ENCODE measurements at regions of chr9 and their contacts with region 1.

Region 1: GRCh38 chr9:107819754-107820153 is 330.2 kb upstream of the KLF4 start:
- DNase-seq: peak; percentile 65 to 69
- H3K4me3 ChIP-seq: no peak overlapping the region
- H3K4me3 Mint-ChIP-seq: no peak overlapping the region
- H3K27ac Mint-ChIP-seq: no peak overlapping the region
- H3K4me1 ChIP-seq: peaks cover 19% of the 10 kb centered on the region
- H3K4me1 Mint-ChIP-seq: peaks cover 25% of the 10 kb centered on the region
- H3K27me3 ChIP-seq: peaks cover 6% of the 10 kb centered on the region
- H3K27me3 Mint-ChIP-seq: peaks cover 14% of the 10 kb centered on the region
- CTCF ChIP-seq: no peak

Region 2: GRCh38 chr9:107576962-107577776 is 242.6 kb before region 1 on chr9:
- CTCF ChIA-PET with region 1: no interaction called
- POLR2A ChIA-PET with region 1: no interaction called
- intact Hi-C with region 1: no loop called
- DNase-seq: no peak
- H3K4me3 ChIP-seq: no peak overlapping the region
- H3K4me3 Mint-ChIP-seq: no peak overlapping the region
- H3K27ac Mint-ChIP-seq: no peak overlapping the region
- H3K4me1 ChIP-seq: no peaks in the 10 kb centered on the region
- H3K4me1 Mint-ChIP-seq: no peaks in the 10 kb centered on the region
- H3K27me3 ChIP-seq: no peaks in the 10 kb centered on the region
- H3K27me3 Mint-ChIP-seq: no peaks in the 10 kb centered on the region
- CTCF ChIP-seq: no peak

Region 3: DNA sequence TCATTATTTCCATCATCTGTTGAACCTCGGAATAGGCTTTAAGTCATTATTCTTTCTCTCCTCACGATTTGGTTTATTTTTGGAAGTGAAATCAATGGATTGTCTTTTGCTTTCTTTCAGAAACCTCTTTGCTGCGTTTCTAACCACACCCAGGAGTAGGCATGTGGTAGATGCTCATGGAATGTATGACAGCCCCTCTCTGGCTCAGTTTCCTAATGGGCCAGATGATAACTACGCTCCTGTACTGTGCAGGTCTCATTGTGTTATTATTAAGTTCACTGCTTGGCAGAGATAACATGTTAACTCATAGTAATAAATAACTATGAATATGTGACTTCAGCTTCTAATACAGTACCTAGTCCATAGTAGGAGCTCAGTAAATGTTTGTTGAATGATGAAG is 154.7 kb before region 1 on chr9:
- CTCF ChIA-PET with region 1: no interaction called
- POLR2A ChIA-PET with region 1: no interaction called
- intact Hi-C with region 1: no loop called
- DNase-seq: no peak
- H3K4me3 ChIP-seq: no peak overlapping the region
- H3K4me3 Mint-ChIP-seq: no peak overlapping the region
- H3K27ac Mint-ChIP-seq: no peak overlapping the region
- H3K4me1 ChIP-seq: no peaks in the 10 kb centered on the region
- H3K4me1 Mint-ChIP-seq: no peaks in the 10 kb centered on the region
- H3K27me3 ChIP-seq: no peaks in the 10 kb centered on the region
- H3K27me3 Mint-ChIP-seq: no peaks in the 10 kb centered on the region
- CTCF ChIP-seq: no peak

Region 4: DNA sequence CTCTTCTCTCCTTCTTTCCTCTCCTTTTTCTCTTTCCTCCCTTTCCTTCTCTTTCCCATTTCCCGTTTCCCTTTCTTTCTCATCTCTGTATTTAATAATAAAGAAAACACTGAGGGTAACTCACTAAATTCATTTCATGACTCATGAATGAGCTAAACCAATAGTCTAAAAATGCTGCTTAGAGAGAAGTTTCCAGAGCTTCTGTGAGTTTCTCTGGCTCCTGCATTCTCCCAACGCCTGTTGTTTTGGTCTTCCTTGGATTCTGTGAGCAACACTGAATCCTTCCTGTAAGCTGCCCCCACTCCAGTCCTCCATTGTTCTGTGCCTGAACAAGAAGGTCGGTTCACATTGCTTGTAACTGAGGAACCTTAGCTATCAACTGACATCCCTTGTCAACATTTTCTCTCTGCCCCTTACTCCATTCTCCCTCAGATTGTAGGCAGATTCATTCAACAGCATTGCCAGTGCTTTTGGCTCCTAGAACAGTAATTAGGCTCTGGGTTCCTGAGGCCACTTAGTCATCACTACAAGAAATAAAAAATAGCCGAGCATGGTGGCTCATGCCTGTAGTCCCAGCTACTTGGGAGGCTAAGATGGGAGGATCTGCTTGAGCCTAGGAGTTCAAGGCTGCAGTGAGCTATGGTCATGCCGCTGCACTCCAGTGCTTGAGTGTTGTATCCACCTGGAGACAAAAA is 92.5 kb before region 1 on chr9:
- CTCF ChIA-PET with region 1: no interaction called
- POLR2A ChIA-PET with region 1: no interaction called
- intact Hi-C with region 1: no loop called
- DNase-seq: no peak
- H3K4me3 ChIP-seq: no peak overlapping the region
- H3K4me3 Mint-ChIP-seq: no peak overlapping the region
- H3K27ac Mint-ChIP-seq: no peak overlapping the region
- H3K4me1 ChIP-seq: no peaks in the 10 kb centered on the region
- H3K4me1 Mint-ChIP-seq: no peaks in the 10 kb centered on the region
- H3K27me3 ChIP-seq: no peaks in the 10 kb centered on the region
- H3K27me3 Mint-ChIP-seq: no peaks in the 10 kb centered on the region
- CTCF ChIP-seq: no peak

Region 5: GRCh38 chr9:107751567-107752210 is 68.1 kb before region 1 on chr9:
- CTCF ChIA-PET with region 1: no interaction called
- POLR2A ChIA-PET with region 1: no interaction called
- intact Hi-C with region 1: loop called (anchors 1 kb)
- DNase-seq: peak; percentile 45 to 73
- H3K4me3 ChIP-seq: no peak overlapping the region
- H3K4me3 Mint-ChIP-seq: no peak overlapping the region
- H3K27ac Mint-ChIP-seq: peak overlapping the region; percentile 64
- H3K4me1 ChIP-seq: peaks cover 34% of the 10 kb centered on the region
- H3K4me1 Mint-ChIP-seq: peaks cover 21% of the 10 kb centered on the region
- H3K27me3 ChIP-seq: no peaks in the 10 kb centered on the region
- H3K27me3 Mint-ChIP-seq: no peaks in the 10 kb centered on the region
- CTCF ChIP-seq: no peak

Region 6: GRCh38 chr9:108016446-108016845 is 196.7 kb after region 1 on chr9:
- CTCF ChIA-PET with region 1: no interaction called
- POLR2A ChIA-PET with region 1: no interaction called
- intact Hi-C with region 1: no loop called
- DNase-seq: no peak
- H3K4me3 ChIP-seq: no peak overlapping the region
- H3K4me3 Mint-ChIP-seq: no peak overlapping the region
- H3K27ac Mint-ChIP-seq: no peak overlapping the region
- H3K4me1 ChIP-seq: no peaks in the 10 kb centered on the region
- H3K4me1 Mint-ChIP-seq: no peaks in the 10 kb centered on the region
- H3K27me3 ChIP-seq: no peaks in the 10 kb centered on the region
- H3K27me3 Mint-ChIP-seq: no peaks in the 10 kb centered on the region
- CTCF ChIP-seq: no peak